Heart left ventricle (tissue), 16 donors: ENCODE measurements at regions of chr2 and their contacts with region 1.

Region 1: DNA sequence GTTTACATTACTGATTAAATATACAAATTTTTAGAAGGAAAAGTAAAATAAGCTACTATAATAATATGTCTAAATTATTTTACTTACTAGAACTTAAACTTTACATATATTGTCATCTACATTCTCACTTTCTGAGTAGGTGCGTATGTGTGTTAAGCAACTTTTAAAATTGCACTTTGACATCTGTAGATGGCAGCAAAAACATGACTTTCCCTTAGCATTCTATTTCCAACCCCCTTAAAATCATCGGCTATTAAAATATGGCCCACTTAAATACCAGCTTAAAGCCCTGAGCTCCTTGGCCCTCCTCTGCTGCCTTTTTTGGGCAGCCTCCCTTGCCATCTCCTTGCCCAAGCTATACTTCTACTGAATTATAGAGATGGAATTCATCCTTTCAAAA is 78.0 kb downstream of the UPP2 start:
- DNase-seq: no peak
- ATAC-seq: peak in 2 of 4 donors; percentile 27 to 60
- H3K4me3 ChIP-seq: no peak overlapping the region
- H3K27ac ChIP-seq: no peak overlapping the region
- H3K4me1 ChIP-seq: peaks cover 0 to 7% (median 0%) of the 10 kb centered on the region in 12 donors
- H3K27me3 ChIP-seq: no peaks in the 10 kb centered on the region
- CTCF ChIP-seq: peak in 11 of 12 donors; percentile 21 to 67 (median 44)
- POLR2A ChIP-seq: no peak

Region 2: DNA sequence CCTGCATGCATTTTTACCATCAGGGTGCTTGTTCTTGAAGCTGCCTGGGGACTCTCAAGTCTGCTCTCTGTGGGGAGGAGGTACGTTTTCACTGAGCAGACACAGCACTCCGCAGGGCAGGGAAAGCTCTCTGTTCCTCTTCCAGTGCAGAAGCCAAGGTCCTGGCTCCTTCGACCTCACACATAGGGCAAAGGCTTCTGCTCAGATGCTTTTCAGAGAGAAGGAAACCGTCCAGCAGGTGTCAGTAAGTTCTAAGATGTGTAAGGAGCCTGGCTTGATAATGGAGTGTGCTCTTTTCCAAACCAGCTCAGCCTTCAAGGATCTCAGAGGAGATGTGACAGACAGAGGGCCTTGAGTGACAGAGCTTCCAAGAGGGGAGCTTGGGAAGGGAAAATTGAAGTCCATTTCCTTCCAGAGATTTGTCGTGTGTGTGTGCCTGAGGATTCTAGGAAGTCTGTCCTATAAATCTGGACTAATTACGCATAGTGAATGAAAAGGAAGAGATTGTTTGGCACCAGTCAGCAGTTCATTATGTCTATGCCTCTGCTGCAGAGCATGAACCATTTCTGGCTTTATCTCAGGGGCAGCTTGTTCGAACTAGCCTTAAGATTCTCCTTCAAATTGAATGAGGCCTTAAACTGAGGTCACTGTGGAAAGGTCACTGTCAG is 145.3 kb before region 1 on chr2:
- intact Hi-C with region 1: loop called in 4 of 10 experiments (anchors 10 kb)
- DNase-seq: peak in 2 of 5 donors; percentile 19 to 29
- ATAC-seq: peak in 3 of 4 donors; percentile 73 to 79 (median 77)
- H3K4me3 ChIP-seq: no peak overlapping the region
- H3K27ac ChIP-seq: no peak overlapping the region
- H3K4me1 ChIP-seq: peaks cover 0 to 5% (median 0%) of the 10 kb centered on the region in 12 donors
- H3K27me3 ChIP-seq: no peaks in the 10 kb centered on the region
- CTCF ChIP-seq: peak; percentile 32 to 63 (median 42)
- POLR2A ChIP-seq: no peak

Region 3: DNA sequence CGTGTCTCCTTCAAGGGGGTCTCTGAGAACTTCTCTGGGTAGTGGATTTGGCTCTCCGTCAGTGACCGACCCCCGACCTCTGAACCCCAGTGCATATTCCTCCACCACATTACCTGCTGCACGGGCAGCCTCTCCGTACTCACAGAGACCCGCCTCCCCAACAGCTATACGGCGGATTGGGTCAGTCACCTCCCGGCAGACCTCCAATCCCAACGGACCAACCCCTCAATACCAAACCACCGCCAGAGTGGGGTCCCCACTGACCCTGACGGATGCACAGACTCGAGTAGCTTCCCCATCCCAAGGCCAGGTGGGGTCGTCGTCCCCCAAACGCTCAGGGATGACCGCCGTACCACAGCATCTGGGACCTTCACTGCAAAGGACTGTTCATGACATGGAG is 445.3 kb after region 1 on chr2:
- intact Hi-C with region 1: loop called in 1 of 10 experiments (anchors 10 kb)
- DNase-seq: peak in 1 of 5 donors; percentile 54
- ATAC-seq: no peak
- H3K4me3 ChIP-seq: no peak overlapping the region
- H3K27ac ChIP-seq: no peak overlapping the region
- H3K4me1 ChIP-seq: peaks cover 0 to 10% (median 0%) of the 10 kb centered on the region in 12 donors
- H3K27me3 ChIP-seq: no peaks in the 10 kb centered on the region
- CTCF ChIP-seq: no peak
- POLR2A ChIP-seq: no peak

Region 4: GRCh38 chr2:158766524-158766923 is 586.9 kb after region 1 on chr2:
- intact Hi-C with region 1: loop called in 1 of 10 experiments (anchors 5 kb)
- DNase-seq: no peak
- ATAC-seq: no peak
- H3K4me3 ChIP-seq: no peak overlapping the region
- H3K27ac ChIP-seq: no peak overlapping the region
- H3K4me1 ChIP-seq: no peaks in the 10 kb centered on the region
- H3K27me3 ChIP-seq: no peaks in the 10 kb centered on the region
- CTCF ChIP-seq: no peak
- POLR2A ChIP-seq: no peak